Esophagus muscularis mucosa (tissue), 4 donors: ENCODE measurements at regions of chr12 and their contacts with region 1.

Region 1: GRCh38 chr12:122190842-122191668 is 8.1 kb downstream of the LRRC43 start:
- DNase-seq: no peak
- H3K4me3 ChIP-seq: no peak overlapping the region
- H3K27ac ChIP-seq: no peak overlapping the region
- H3K4me1 ChIP-seq: no peaks in the 10 kb centered on the region
- H3K27me3 ChIP-seq: peaks cover 0 to 9% (median 0%) of the 10 kb centered on the region in 4 donors
- CTCF ChIP-seq: peak; percentile 49 to 75 (median 71)
- EP300 ChIP-seq: no peak
- POLR2A ChIP-seq: no peak

Region 2: DNA sequence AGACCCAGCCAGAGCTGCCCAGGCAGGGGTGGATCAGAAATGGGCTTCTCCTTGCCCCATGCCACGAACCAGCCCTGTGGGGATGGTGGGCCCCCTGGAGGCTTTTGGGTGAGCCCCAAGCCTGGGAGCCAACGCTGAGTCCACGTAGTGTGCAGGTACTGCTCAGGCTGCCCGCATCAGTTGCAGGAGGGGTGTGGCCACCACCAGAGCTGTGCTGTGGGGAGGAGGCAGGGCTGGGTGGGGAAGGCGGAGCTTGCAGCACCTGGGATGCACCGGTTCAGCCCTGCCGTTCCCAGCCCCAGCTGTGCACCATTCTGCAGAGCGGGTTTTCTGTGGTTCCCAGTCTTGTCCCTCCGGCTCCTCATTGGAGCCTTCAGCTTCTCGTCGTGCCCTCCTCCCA is 53.4 kb before region 1 on chr12:
- intact Hi-C with region 1: loop called (anchors 10 kb)
- DNase-seq: no peak
- H3K4me3 ChIP-seq: no peak overlapping the region
- H3K27ac ChIP-seq: no peak overlapping the region
- H3K4me1 ChIP-seq: no peaks in the 10 kb centered on the region
- H3K27me3 ChIP-seq: no peaks in the 10 kb centered on the region
- CTCF ChIP-seq: no peak
- EP300 ChIP-seq: no peak
- POLR2A ChIP-seq: no peak